ENCODE measurements at regions of chr7 and their contacts with region 1.

Region 1: DNA sequence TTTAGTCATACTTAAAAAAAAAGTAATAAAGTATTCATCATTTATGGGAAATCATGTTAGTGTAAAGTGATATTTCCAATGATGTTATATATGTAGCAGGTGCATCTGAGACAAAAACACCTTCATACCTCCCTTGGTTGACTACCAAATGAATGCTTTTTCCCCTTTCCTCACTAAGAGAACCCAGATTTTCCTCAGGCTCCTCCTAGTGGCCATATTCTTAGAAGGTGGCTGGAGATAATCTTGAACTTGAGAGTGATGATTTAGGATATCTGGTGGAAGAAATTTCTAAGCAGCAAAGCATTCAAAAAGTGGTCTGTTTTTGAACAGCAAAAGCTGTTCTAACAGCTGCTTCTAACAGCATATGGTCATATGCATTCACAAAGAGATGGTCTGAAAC is 16.8 kb upstream of the DNAH11 start:
- DNase-seq: peak in 3 of 5 donors; percentile 9 to 23 (median 18)
- H3K4me3 ChIP-seq: no peak overlapping the region
- H3K4me3 Mint-ChIP-seq: no peak overlapping the region
- H3K27ac ChIP-seq: no peak overlapping the region
- H3K27ac Mint-ChIP-seq: no peak overlapping the region
- H3K4me1 ChIP-seq: no peaks in the 10 kb centered on the region
- H3K4me1 Mint-ChIP-seq: no peaks in the 10 kb centered on the region
- H3K27me3 ChIP-seq: no peaks in the 10 kb centered on the region
- H3K27me3 Mint-ChIP-seq: no peaks in the 10 kb centered on the region

Region 2: DNA sequence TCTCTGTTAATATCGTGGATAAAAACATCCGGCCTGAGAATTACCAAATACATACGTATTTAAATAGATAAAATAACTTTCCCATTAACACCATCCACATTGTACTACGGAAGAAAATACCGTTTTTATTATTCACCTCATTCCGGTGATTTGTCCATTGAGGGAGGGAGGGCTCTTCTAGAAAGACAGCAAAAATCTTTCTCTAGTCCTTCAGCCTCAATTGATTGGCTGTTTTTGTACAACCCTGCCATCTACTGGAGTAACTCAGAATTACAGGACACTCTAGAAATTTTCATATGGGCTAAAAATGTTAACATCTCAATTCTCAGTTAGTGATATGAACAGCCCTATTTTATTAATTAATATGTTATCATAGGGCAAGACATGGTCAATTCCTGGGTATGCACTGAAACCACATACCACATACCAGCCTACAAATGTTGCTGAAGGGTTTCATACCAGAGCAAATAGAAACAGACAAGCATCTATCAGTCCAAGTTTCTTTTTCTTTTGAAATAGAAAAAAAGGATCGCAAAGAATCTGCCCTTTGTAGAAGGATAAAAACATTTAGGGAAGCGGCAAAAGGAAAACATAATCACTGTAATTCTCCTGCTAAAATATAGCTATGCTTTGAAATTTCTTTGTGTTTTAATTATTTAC is 475.5 kb after region 1 on chr7:
- CTCF ChIA-PET with region 1: interaction called, 3 read pairs
- POLR2A ChIA-PET with region 1: no interaction called
- intact Hi-C with region 1: loop called (anchors 5 kb)
- DNase-seq: peak; percentile 27 to 56 (median 47)
- H3K4me3 ChIP-seq: no peak overlapping the region
- H3K4me3 Mint-ChIP-seq: peak overlapping the region in 3 of 8 donors; percentile 33 to 63 (median 60)
- H3K27ac ChIP-seq: no peak overlapping the region
- H3K27ac Mint-ChIP-seq: peak overlapping the region in 1 of 7 donors; percentile 19
- H3K4me1 ChIP-seq: no peaks in the 10 kb centered on the region
- H3K4me1 Mint-ChIP-seq: peaks cover 0 to 5% (median 2%) of the 10 kb centered on the region in 4 donors
- H3K27me3 ChIP-seq: no peaks in the 10 kb centered on the region
- H3K27me3 Mint-ChIP-seq: peaks cover 2 to 6% of the 10 kb centered on the region in 2 donors

Measured in CD4-positive, alpha-beta memory T cell (primary cell).